PC-3 (cell line): ENCODE measurements at regions of chr3 and their contacts with region 1.

Region 1: DNA sequence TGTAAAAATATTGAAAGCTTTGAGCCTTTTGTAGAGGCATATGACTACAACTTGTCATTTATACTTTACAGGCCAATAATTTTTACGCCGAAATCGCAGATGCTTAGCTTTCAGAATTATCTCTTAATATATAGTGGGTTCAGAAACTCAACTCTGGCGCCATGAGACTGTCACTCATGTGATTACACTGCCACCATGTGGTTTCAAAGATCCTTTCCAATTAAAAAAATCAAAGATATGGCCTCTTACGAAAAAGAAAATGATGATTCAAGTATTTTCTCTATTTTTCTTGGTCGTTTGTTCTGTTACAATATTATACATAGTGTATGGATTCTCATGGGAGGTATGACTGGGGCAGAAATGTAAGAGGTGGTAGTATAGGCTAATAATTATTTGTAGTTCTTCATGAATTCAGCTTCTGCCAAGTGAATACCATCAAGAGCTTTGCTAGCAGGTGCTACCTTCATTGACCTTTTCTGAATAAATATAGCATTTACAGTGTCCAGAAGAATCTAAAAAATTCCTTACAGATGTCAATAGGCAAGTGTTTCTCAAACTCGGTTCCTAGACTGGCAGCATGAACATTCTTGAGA is 751.7 kb upstream of the GOLIM4 start:
- DNase-seq: peak; percentile 66
- ATAC-seq: peak; percentile 77
- H3K4me3 ChIP-seq: no peak overlapping the region
- H3K27ac ChIP-seq: no peak overlapping the region
- H3K4me1 ChIP-seq: no peaks in the 10 kb centered on the region; the same call in 1 of the 2 replicates
- H3K27me3 ChIP-seq: peaks cover 31% of the 10 kb centered on the region
- CTCF ChIP-seq: peak; percentile 89

Region 2: DNA sequence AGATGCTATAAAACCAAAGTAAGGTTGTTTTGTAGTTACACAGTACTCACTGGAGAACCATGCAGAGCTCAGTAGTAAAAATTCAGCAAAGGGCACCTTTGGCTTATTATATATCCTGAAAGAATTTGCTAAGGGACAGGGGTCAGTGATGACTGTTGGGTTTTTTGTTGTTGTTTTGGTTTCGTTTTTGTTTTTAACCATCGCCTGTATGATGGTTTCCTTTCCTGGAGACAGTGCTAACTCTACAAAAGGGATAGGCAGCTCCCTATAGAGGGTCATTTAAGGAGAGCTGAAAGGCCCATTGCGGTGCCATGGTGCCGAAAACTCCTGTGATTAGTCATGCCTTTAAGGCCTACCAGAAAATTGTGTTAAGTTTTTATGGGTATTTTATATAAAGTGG is 633.5 kb before region 1 on chr3:
- CTCF ChIA-PET with region 1: interaction called, 17 read pairs
- POLR2A ChIA-PET with region 1: no interaction called
- intact Hi-C with region 1: loop called (anchors 1 kb)
- DNase-seq: no peak
- ATAC-seq: no peak
- H3K4me3 ChIP-seq: no peak overlapping the region
- H3K27ac ChIP-seq: no peak overlapping the region
- H3K4me1 ChIP-seq: no peaks in the 10 kb centered on the region
- H3K27me3 ChIP-seq: no peaks in the 10 kb centered on the region
- CTCF ChIP-seq: no peak

Region 3: DNA sequence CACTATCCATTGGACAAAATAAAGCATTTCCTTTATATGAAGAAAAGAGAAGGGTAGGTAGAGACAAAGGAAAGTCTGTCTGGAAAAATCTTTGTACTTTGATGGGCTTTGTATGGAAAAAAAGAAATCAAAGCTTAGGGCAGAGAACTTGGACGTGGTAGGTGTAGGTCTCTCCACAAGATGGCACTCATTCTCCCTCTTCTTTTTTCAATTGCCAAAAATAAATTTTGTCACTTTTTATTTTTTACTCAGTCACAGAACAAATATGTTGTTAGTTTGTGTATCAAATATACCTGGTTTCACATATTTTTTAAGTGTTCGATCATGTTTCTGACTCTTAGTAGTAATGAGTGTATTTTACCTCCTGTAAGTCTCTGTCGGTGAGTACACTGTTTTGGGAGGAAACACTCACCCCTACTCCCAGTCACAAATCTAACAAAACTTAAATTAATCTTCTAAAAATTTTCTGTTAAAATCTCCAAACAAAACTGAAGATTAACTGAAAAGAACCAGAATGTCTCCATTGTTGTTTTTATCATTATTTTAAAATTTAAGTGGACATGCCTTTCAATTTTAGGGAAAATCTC is 335.9 kb before region 1 on chr3:
- CTCF ChIA-PET with region 1: interaction called, 8 read pairs
- POLR2A ChIA-PET with region 1: no interaction called
- intact Hi-C with region 1: loop called (anchors 1 kb)
- DNase-seq: peak; percentile 50
- ATAC-seq: peak; percentile 48
- H3K4me3 ChIP-seq: no peak overlapping the region
- H3K27ac ChIP-seq: no peak overlapping the region
- H3K4me1 ChIP-seq: no peaks in the 10 kb centered on the region
- H3K27me3 ChIP-seq: no peaks in the 10 kb centered on the region
- CTCF ChIP-seq: peak; percentile 84

Region 4: DNA sequence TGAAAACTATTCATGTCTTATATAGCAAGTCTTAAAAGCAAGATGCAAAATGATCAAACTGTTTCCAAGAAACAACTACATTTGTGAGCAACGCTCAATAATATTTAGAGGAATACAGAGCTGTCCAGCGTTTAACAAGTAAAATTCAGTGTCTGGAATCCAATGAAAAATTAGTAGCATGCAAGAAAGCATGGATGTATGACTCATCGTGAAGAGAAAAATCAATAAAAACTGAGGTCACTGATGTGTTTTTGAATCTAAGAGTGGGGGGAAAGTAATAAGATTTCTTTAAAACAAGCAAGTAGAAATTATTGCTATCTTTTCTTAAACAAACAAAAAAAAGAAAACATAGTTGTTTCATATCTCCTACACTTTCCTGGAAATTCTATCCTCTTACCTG is 151.3 kb before region 1 on chr3:
- CTCF ChIA-PET with region 1: no interaction called
- POLR2A ChIA-PET with region 1: no interaction called
- intact Hi-C with region 1: loop called (anchors 5 kb)
- DNase-seq: peak; percentile 8
- ATAC-seq: peak; percentile 29; the same call in 1 of the 2 replicates
- H3K4me3 ChIP-seq: no peak overlapping the region
- H3K27ac ChIP-seq: no peak overlapping the region
- H3K4me1 ChIP-seq: no peaks in the 10 kb centered on the region
- H3K27me3 ChIP-seq: 0 out of 2 replicates have a peak, but pooled peaks cover 4% of the 10 kb centered on the region
- CTCF ChIP-seq: no peak

Region 5: DNA sequence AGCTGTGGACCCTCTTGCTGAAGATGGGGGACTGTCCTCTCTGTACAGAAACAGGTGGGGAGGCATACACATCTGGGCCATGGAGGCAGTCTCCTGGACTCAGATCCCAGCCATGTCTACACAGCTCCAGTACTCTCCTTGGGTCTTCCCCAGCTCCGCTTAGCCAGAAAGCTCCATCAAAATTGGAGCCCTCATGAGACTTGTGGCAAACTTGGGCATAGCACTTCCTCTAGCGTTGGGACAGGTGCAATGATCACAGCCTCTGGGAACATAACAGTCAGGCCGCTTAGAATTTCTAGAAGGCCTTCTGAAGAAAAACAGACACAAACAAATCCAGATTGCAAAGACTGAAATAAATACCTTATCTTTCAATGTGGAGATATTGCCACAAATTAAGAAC is 117.3 kb before region 1 on chr3:
- CTCF ChIA-PET with region 1: no interaction called
- POLR2A ChIA-PET with region 1: no interaction called
- intact Hi-C with region 1: no loop called
- DNase-seq: no peak
- ATAC-seq: no peak
- H3K4me3 ChIP-seq: no peak overlapping the region
- H3K27ac ChIP-seq: no peak overlapping the region
- H3K4me1 ChIP-seq: no peaks in the 10 kb centered on the region
- H3K27me3 ChIP-seq: no peaks in the 10 kb centered on the region
- CTCF ChIP-seq: 0 out of 2 replicates have a peak, but pooled peaks have one; percentile 17